AG04449 (cell line): ENCODE measurements at regions of chr15 and their contacts with region 1.

Region 1: GRCh38 chr15:74799856-74800547 is 12.6 kb upstream of the LMAN1L start:
- DNase-seq: no peak
- H3K4me3 ChIP-seq: no peak overlapping the region
- CTCF ChIP-seq: peak; percentile 97

Region 2: GRCh38 chr15:74787251-74788041 is 12.6 kb before region 1 on chr15:
- CTCF ChIA-PET with region 1: interaction called, 136 read pairs
- POLR2A ChIA-PET with region 1: no interaction called
- DNase-seq: no peak
- H3K4me3 ChIP-seq: no peak overlapping the region
- CTCF ChIP-seq: peak; percentile 81

Region 3: GRCh38 chr15:74958320-74958907 is 158.4 kb after region 1 on chr15:
- CTCF ChIA-PET with region 1: no interaction called
- POLR2A ChIA-PET with region 1: no interaction called
- DNase-seq: no peak
- H3K4me3 ChIP-seq: peak overlapping the region; percentile 42
- CTCF ChIP-seq: no peak